HAP-1 (cell line): ENCODE measurements at regions of chr15 and their contacts with region 1.

Region 1: DNA sequence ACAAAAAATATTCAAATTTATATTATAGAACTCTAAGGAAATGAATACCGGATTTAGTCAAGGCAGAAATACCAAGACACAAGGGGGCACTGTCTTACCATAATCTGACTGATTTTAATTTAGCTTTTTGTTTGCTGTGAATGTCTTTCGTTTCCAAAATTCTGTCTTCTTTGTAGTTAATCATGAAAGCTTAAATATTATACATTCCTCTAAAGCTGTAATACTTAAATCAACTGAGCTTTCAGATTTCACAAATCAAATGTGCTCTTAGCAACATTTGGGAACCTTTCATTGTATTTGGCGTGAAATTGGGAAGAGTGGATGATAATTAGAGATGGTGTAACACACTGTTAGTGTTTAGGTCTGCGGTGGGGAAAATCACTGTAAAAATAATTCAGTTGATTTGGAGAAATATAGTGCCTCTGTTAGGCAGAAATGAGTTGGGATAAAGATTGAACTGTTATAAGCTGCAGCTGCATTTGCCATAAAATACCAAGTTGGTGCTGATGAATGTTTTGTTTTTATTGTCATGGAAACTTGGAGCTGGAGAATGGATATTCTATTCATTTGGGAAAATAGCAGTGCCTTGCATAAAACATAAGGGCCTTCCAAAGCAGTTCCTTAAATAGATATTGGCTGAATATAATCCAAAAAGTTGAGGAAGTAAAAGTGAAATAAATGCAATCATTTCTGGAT is 228.2 kb downstream of the TCF12 start:
- DNase-seq: peak; percentile 43 to 75
- H3K4me3 ChIP-seq: peak overlapping the region; percentile 3; the same call in 1 of the 2 replicates
- H3K4me1 ChIP-seq: peaks cover 11% of the 10 kb centered on the region
- H3K27me3 ChIP-seq: no peaks in the 10 kb centered on the region

Region 2: GRCh38 chr15:55993111-55993803 is 1153.4 kb before region 1 on chr15 and contains the start of gene NEDD4:
- in situ Hi-C with region 1: no loop called
- DNase-seq: peak; percentile 89 to 93
- H3K4me3 ChIP-seq: peak within 1 kb of the TSS; percentile 82
- H3K4me1 ChIP-seq: peaks cover 19% of the 10 kb centered on the region
- H3K27me3 ChIP-seq: no peaks in the 10 kb centered on the region

Region 3: DNA sequence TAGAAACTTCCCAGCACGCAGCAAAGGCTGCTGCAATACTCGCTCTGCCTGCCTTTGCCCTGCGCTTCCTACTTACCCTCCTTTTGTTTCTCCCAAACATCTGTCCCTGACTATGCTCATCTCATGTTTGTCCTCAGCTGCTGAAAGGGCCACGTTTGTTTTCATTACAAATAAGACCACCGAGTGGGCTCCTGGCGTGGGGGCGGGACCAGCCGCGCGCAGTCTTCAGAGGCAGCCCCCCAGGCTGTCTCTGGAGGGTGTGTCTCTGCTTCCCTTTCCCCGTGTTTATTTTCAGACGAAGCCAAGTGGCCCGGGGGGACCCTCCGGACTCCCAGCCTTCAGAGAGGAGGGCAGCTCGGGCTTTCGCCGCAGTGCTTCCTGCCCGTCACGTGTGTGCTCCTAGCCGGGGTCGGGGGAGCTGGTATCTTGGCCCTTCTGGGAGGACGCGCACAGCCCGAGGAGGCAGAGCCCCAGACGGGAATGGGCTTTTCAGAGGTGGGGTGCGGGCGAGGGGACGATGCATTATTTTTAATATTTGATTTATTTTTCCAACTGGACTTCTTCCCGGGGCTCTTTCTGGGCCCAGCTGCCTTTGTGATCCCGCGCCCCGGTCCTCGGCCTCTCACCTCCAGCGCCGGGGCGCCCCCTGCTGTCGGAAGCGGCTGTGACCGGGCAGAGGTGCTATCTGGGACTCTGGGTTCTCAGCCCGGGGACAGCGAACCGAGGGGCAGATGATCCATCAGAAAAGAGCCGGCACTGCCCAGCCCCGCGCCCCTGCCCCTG is 159.7 kb after region 1 on chr15:
- in situ Hi-C with region 1: loop called (anchors 5 kb)
- DNase-seq: peak; percentile 43 to 96
- H3K4me3 ChIP-seq: peak overlapping the region; percentile 25
- H3K4me1 ChIP-seq: peaks cover 9% of the 10 kb centered on the region
- H3K27me3 ChIP-seq: no peaks in the 10 kb centered on the region

Region 4: GRCh38 chr15:57537072-57537471 is 390.4 kb after region 1 on chr15:
- in situ Hi-C with region 1: loop called (anchors 10 kb)
- DNase-seq: no peak
- H3K4me3 ChIP-seq: no peak overlapping the region
- H3K4me1 ChIP-seq: no peaks in the 10 kb centered on the region
- H3K27me3 ChIP-seq: no peaks in the 10 kb centered on the region

Region 5: GRCh38 chr15:57591646-57592367 is 445.2 kb after region 1 on chr15 and contains the start of gene MYZAP:
- in situ Hi-C with region 1: no loop called
- DNase-seq: no peak
- H3K4me3 ChIP-seq: no peak within 1 kb of the TSS
- H3K4me1 ChIP-seq: no peaks in the 10 kb centered on the region
- H3K27me3 ChIP-seq: no peaks in the 10 kb centered on the region

Region 6: DNA sequence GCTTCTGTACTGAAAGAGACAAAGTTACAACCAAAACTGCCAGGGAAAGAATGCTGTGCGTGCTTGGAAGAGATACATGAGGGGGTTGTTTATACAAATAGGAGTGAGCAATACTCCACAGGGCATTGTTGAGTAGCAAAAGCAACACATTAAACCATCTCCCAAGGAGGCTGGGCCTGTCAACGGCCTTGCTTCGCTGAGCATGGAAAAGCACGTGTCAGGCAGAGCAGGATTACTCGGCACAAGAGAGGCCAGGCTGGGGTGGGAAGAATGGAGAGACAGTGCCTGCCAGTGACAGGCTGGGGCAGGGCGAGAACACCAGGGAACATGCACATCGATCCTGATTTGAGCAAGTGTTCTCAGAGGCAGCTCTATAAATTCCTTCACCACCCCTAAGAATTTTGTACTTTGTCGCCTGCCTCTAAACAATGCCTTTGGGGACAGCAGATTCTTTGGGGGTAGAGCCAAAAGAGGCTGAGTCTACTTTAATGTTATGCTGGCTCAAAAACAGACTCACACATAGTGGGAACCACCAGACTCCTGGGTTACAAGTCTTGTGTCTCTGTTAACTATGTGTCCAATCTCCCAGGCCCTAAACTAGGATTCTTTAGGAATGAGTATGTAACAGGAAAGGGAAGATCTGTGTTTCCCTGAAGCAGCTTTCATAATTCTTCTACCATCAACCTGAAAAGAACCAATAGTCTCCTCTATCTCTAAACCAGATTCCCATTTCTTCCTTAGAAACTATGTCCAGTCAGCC is 1352.3 kb after region 1 on chr15:
- in situ Hi-C with region 1: no loop called
- DNase-seq: no peak
- H3K4me3 ChIP-seq: no peak overlapping the region
- H3K4me1 ChIP-seq: no peaks in the 10 kb centered on the region
- H3K27me3 ChIP-seq: no peaks in the 10 kb centered on the region